AG04449 (cell line): ENCODE measurements at regions of chr15 and their contacts with region 1.

Region 1: DNA sequence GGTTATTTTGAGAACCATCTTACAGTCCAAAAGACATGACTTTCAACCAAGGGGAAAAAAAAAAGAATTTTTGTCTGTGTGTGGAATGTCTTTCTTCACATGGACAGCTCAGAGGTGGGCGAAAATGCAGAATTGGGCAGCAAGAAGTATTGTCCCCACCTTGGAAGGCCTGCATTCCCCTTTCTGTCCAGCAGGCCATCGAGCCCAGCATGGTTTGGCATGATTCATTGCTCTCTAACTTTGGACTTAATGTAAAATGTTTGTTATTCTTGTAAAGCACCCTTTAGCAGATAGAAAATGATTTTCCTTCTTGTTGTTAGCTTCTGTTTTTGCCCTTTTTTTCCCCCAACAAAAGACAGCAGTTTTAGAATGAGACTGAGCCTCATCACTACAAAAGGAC is 12.4 kb downstream of the MYO1E start:
- DNase-seq: no peak
- H3K4me3 ChIP-seq: no peak overlapping the region
- CTCF ChIP-seq: no peak

Region 2: GRCh38 chr15:59349680-59350420 is 10.5 kb before region 1 on chr15:
- CTCF ChIA-PET with region 1: interaction called, 13 read pairs
- POLR2A ChIA-PET with region 1: no interaction called
- DNase-seq: peak; percentile 75
- H3K4me3 ChIP-seq: no peak overlapping the region
- CTCF ChIP-seq: no peak